ENCODE measurements at regions of chr12 and their contacts with region 1.

Region 1: DNA sequence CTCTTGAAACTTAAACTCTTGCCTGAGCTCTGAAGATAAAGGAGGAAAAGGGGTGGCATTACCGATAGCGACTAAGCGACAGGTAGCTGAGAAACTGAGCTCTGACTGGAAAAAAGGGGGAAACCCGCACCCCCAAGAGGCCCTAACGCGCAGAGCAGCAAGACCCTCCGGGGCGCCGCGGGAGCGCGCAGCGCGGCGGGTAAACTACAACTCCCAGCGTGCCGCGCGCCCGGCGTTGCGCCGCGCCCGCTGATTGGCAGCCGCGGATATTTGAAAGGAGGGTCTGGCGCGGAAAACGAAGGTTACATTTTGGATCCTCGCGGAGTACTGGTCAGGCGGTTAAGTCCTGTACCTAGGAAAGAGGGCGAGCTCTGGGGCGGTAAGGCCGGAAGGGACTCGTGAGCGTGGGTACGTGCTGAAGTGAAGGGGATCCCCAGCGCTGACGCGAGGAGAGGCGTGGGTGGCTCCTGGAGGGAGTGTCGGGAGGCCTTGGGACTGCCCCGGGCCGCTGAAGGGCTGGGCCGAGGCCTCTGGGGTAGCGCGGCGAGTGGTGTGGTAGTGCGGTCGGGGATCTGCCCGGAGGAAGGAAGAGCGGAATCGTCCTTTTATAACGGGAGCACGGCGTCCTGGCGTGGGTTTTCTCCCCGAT is at the start of gene ESPL1:
- DNase-seq: peak; percentile 54 to 92
- H3K4me3 ChIP-seq: peak within 1 kb of the TSS; percentile 82 to 97 (median 90)
- H3K27ac ChIP-seq: no peak within 1 kb of the TSS
- H3K4me1 ChIP-seq: peaks cover 3 to 11% (median 5%) of the 10 kb centered on the region in 4 experiments; a peak in 5 of 7 replicates
- H3K27me3 ChIP-seq: peaks cover 0 to 2% (median 0%) of the 10 kb centered on the region in 4 experiments; a peak in 1 of 7 replicates
- CTCF ChIP-seq: peak; percentile 41 to 61 (median 50)
- EP300 ChIP-seq: no peak
- POLR2A ChIP-seq: no peak
- RAD21 ChIP-seq: peak; percentile 63 to 69
- total RNA-seq, gene ESPL1: 47.0 and 52.7 TPM in 2 replicates

Region 2: GRCh38 chr12:53174881-53175491 is 93.1 kb before region 1 on chr12:
- CTCF ChIA-PET with region 1: interaction called, 11 read pairs
- POLR2A ChIA-PET with region 1: interaction called, 5 read pairs
- DNase-seq: no peak
- H3K4me3 ChIP-seq: no peak overlapping the region
- H3K27ac ChIP-seq: no peak overlapping the region
- H3K4me1 ChIP-seq: peaks cover 1 to 9% (median 5%) of the 10 kb centered on the region in 4 experiments; a peak in 4 of 7 replicates
- H3K27me3 ChIP-seq: peaks cover 14 to 74% (median 57%) of the 10 kb centered on the region in 4 experiments
- CTCF ChIP-seq: peak in 2 of 3 experiments; percentile 64 to 66; a peak in 3 of 4 replicates
- EP300 ChIP-seq: no peak
- POLR2A ChIP-seq: no peak
- RAD21 ChIP-seq: peak; percentile 56 to 62

Region 3: GRCh38 chr12:53231826-53232645 is 36.1 kb before region 1 on chr12 and contains the start of gene RARG:
- CTCF ChIA-PET with region 1: interaction called, 654 read pairs
- POLR2A ChIA-PET with region 1: interaction called, 8 read pairs
- DNase-seq: peak in 1 of 2 experiments; percentile 83
- H3K4me3 ChIP-seq: peak within 1 kb of the TSS; percentile 72 to 79 (median 76)
- H3K27ac ChIP-seq: no peak within 1 kb of the TSS
- H3K4me1 ChIP-seq: peaks cover 35 to 68% (median 46%) of the 10 kb centered on the region in 4 experiments
- H3K27me3 ChIP-seq: no peaks in the 10 kb centered on the region
- CTCF ChIP-seq: no peak
- EP300 ChIP-seq: no peak
- POLR2A ChIP-seq: no peak
- RAD21 ChIP-seq: no peak
- total RNA-seq, gene RARG: 68.6 and 68.9 TPM in 2 replicates

Region 4: GRCh38 chr12:53251477-53252348 is 16.4 kb before region 1 on chr12:
- CTCF ChIA-PET with region 1: interaction called, 112 read pairs
- POLR2A ChIA-PET with region 1: interaction called, 3 read pairs
- DNase-seq: peak in 1 of 2 experiments; percentile 86
- H3K4me3 ChIP-seq: peak overlapping the region; percentile 71 to 94 (median 80)
- H3K27ac ChIP-seq: peak overlapping the region; percentile 54; the same call in 1 of the 2 replicates
- H3K4me1 ChIP-seq: peaks cover 0 to 12% (median 3%) of the 10 kb centered on the region in 4 experiments; a peak in 5 of 7 replicates
- H3K27me3 ChIP-seq: no peaks in the 10 kb centered on the region
- CTCF ChIP-seq: peak; percentile 56 to 69 (median 65)
- EP300 ChIP-seq: no peak
- POLR2A ChIP-seq: peak in 1 of 2 experiments; percentile 54; a peak in 1 of 3 replicates
- RAD21 ChIP-seq: peak; percentile 78 to 84

Region 5: GRCh38 chr12:53287741-53288216 is 19.7 kb after region 1 on chr12:
- CTCF ChIA-PET with region 1: interaction called, 179 read pairs
- POLR2A ChIA-PET with region 1: interaction called, 5 read pairs
- DNase-seq: peak in 1 of 2 experiments; percentile 81
- H3K4me3 ChIP-seq: no peak overlapping the region
- H3K27ac ChIP-seq: no peak overlapping the region
- H3K4me1 ChIP-seq: no peaks in the 10 kb centered on the region
- H3K27me3 ChIP-seq: no peaks in the 10 kb centered on the region
- CTCF ChIP-seq: peak; percentile 80 to 86 (median 85)
- EP300 ChIP-seq: no peak
- POLR2A ChIP-seq: no peak
- RAD21 ChIP-seq: peak; percentile 74 to 81